ENCODE measurements at regions of chr2 and their contacts with region 1.

Region 1: GRCh38 chr2:196068271-196069209 is at the start of gene DNAH7:
- DNase-seq: peak; percentile 91
- CTCF ChIP-seq: peak; percentile 96

Region 2: GRCh38 chr2:195672668-195673067 is 395.9 kb before region 1 on chr2:
- in situ Hi-C with region 1: loop called (anchors 10 kb)
- DNase-seq: no peak
- CTCF ChIP-seq: no peak

Region 3: DNA sequence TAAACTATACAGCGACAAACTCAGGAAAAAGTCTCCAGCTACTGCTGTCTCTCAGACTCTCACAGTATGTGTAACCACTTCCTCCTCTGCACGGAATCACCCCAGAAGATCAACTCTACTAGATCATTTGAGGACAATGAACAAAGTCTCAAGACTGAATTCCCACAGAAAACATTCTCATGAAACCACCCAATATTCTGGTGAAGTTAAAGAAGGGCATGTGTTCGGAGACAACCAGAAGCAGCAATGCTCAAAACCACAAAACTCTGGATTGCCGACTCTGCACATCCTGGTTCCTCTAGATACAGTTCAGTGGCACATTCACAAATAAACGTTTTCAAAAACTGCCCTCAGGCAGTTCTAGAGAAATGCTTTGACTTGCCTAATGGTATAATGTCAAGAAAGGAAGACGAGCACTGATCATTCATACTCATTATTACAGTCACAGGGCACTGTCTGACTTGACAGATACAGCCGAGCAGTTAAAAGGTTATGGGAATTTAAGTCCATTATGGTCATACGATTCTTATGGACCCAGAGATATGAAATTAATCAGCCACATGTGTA is 194.7 kb after region 1 on chr2:
- in situ Hi-C with region 1: no loop called
- DNase-seq: peak; percentile 37
- CTCF ChIP-seq: no peak

Region 4: DNA sequence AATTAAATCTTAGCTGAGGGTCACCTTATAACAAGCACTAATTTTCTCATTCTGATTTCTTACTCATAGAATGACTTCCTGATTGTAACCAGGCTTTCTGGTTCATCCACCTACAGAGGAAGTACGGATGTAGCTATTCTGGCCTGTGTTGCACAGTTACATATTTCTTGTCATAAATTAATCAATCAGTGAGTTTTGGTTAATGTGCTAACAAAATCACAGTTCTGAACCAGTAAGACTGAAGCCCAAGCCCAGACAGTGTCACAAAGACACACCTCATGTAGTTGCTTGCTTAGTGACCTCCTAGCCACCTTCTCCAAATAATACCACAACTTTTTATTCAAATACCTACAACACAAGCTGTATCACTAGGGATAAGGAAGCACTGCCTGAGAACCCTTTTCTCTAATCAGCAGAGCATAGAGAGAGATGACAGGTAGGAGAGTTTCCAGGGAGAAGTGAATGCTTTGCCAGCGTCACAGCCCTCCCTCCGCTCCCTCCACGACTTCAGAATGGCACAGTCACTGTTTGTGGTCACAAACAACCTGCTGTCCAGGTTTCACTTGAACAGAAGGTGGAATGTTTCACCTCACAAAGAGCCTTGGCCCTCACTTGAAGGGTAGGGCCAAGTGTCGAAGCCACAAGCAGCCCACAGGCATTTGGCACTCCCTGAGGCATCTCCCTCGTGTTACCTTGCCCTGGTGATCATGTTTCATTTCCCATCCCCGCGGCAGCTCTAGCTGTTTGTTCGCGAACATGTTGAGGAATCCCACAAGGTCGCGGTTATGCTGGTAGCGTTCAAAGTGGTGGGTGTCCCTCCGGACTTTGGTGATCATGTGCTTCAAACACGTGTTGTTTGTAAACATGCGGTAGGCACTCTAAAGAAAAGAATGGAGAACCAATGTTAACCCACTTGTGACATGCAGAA is 223.6 kb after region 1 on chr2:
- in situ Hi-C with region 1: no loop called
- DNase-seq: no peak
- CTCF ChIP-seq: no peak

Region 5: DNA sequence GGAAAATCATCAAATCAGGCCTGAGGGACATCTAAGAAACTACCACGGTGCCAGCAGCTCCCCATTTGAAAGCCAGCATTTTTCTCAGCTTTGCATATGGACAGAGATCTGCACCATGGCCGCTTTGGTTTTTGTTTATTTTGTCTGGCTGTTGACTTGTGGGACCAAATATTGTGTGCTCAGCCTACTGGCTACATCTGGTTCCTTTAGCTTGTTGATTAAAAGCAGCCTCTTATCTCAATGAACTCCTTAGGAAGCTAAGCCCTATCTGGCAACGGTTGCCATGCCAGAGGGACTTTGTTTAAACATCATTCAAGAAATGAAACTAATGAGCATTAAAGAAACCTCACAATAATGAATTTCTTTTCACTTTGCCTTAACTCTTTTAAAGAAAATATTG is 538.5 kb after region 1 on chr2:
- in situ Hi-C with region 1: no loop called
- DNase-seq: no peak
- CTCF ChIP-seq: no peak

Region 6: DNA sequence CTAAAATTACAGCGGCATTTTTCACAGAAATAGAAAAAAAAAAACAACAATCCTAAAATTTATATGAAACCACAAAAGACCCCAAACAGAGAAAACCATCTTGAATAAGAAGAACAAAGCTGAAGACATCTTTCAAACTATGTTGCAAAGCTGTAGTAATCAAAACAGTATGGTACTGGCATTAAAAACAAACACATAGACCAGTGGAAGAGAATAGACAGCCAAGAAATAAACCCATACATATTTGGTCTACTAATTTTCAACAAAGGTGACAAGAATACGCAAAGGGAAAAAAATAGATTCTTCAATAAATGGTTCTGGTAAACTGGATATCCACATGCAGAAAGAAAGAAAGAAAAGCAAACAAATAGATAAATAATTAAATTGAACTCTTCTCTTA is 562.0 kb after region 1 on chr2:
- in situ Hi-C with region 1: no loop called
- DNase-seq: no peak
- CTCF ChIP-seq: no peak

Measured in GM13976 (cell line).